ENCODE measurements at regions of chr16 and their contacts with region 1.

Region 1: GRCh38 chr16:70402916-70403659 is 35.8 kb downstream of the ST3GAL2 start:
- DNase-seq: no peak
- ATAC-seq: no peak
- H3K4me3 Mint-ChIP-seq: no peak overlapping the region
- H3K27ac Mint-ChIP-seq: no peak overlapping the region
- H3K4me1 Mint-ChIP-seq: peaks cover 53% of the 10 kb centered on the region
- H3K27me3 Mint-ChIP-seq: peaks cover 6% of the 10 kb centered on the region
- CTCF ChIP-seq: no peak

Region 2: DNA sequence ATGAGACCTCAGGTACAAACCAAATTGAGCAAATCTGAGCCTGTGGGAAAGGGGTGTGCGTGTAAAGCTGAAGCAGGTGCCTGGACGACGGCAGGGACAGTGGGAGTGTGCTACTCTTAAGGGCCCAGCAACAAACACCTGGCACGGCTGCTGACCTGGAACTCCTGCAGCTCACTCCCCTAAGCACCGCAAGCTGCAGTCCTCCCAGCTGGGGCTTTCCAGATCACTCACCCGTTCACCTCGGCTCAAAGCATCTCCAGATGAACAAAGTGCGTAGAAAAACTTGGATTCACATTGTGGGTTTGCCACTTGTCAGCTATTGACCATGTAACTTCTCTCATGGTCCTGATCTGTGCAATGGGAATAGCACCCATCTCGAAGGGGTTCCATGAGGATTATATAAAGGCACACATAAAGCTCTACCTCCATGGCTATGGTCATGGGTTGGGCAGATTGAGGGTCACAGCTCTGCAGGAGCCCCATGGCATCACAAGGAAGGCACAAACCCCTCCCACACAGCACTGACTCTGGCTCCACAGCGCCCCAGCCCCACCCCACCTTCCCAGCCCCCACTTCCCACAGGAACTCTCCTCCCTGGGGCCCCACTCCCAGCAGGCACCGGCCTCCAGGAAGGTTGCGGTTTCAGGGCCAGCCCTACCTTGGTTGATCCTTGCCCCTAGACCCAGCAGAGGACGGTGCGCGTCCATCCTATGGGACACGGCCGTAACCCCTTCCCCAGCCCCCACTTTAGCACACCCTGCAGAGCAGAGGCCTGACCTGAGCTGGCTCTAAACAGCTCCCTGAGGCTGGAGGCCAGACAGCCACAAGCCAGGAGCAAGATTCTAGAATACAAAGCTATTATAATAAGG is 13.9 kb after region 1 on chr16:
- CTCF ChIA-PET with region 1: no interaction called
- POLR2A ChIA-PET with region 1: interaction called, 21 read pairs
- intact Hi-C with region 1: loop called (anchors 1 kb)
- DNase-seq: peak; percentile 49
- ATAC-seq: peak; percentile 95
- H3K4me3 Mint-ChIP-seq: peak overlapping the region; percentile 50
- H3K27ac Mint-ChIP-seq: peak overlapping the region; percentile 78
- H3K4me1 Mint-ChIP-seq: peaks cover 60% of the 10 kb centered on the region
- H3K27me3 Mint-ChIP-seq: no peaks in the 10 kb centered on the region
- CTCF ChIP-seq: no peak

Region 3: DNA sequence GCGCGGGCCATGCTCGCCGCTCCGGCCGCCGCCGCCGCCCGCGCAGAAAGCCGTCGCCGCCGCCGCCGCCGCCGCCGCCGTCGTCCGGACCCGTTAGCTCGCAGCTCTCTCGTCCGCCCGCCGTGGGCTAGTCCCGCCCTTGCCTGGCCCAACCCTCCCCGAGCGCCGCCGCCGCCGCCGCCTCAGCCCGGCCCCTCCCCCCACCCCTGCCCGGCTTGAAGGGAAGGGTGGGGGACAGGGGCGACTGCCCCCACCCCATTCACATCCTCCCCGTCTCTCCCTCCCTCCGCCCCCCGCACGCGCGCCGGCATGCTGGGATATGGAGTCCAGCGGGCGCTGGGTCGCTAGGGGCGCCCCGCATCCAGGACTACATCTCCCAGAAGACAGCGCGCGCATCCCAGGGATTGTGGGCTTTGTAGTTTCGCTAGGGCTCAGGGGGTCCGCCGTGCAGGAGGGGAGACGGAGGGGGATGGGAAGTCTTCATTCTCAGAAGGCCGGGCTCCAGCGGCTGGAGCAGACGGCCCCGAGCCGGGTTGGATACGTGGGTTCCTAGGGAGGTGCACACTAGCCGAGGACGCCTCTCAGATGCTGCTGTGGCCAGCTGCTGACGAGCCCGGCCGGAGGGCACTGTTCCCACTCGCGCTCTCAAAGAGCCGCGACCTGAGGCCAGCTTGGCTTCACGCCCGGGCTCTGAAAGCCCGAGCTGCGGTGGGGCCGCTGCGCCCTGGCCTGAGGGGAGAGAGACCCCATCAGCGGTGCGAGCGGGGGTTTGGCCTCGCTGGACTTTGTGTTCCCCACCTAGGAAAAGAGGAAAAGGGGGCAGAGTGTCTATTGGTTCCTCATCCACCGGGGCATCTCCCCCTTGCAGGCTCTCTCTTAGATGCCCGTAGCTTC is 36.1 kb after region 1 on chr16 and contains the start of gene ST3GAL2:
- CTCF ChIA-PET with region 1: no interaction called
- POLR2A ChIA-PET with region 1: interaction called, 7 read pairs
- intact Hi-C with region 1: loop called (anchors 1 kb)
- DNase-seq: peak; percentile 90
- ATAC-seq: peak; percentile 96
- H3K4me3 Mint-ChIP-seq: peak within 1 kb of the TSS; percentile 96
- H3K27ac Mint-ChIP-seq: peak within 1 kb of the TSS; percentile 86
- H3K4me1 Mint-ChIP-seq: peaks cover 39% of the 10 kb centered on the region
- H3K27me3 Mint-ChIP-seq: no peaks in the 10 kb centered on the region
- CTCF ChIP-seq: no peak
- total RNA-seq, gene ST3GAL2: 51.5 and 57.4 TPM in 2 replicates

Region 4: GRCh38 chr16:70540994-70541393 is 137.9 kb after region 1 on chr16:
- CTCF ChIA-PET with region 1: no interaction called
- POLR2A ChIA-PET with region 1: no interaction called
- intact Hi-C with region 1: no loop called
- DNase-seq: no peak
- ATAC-seq: no peak
- H3K4me3 Mint-ChIP-seq: no peak overlapping the region
- H3K27ac Mint-ChIP-seq: no peak overlapping the region
- H3K4me1 Mint-ChIP-seq: no peaks in the 10 kb centered on the region
- H3K27me3 Mint-ChIP-seq: no peaks in the 10 kb centered on the region
- CTCF ChIP-seq: no peak